Activated CD4-positive, alpha-beta T cell treated with anti-CD3 and anti-CD28 coated beads, Interleukin-2, amount 10 ng/mL, durations not matched to agents 24 days and 14 days (primary cell): ENCODE measurements at regions of chr2 and their contacts with region 1.

Region 1: GRCh38 chr2:96265840-96266679 is at the starts of genes CIAO1 and TMEM127:
- DNase-seq: peak; percentile 100
- H3K4me3 Mint-ChIP-seq: peak within 1 kb of the TSS; percentile 99
- H3K27ac Mint-ChIP-seq: peak within 1 kb of the TSS; percentile 98
- H3K4me1 Mint-ChIP-seq: peaks cover 38% of the 10 kb centered on the region
- H3K27me3 Mint-ChIP-seq: no peaks in the 10 kb centered on the region
- total RNA-seq, gene CIAO1: 105 and 110 TPM in 2 replicates
- total RNA-seq, gene TMEM127: 31.6 and 33.1 TPM in 2 replicates

Region 2: GRCh38 chr2:96208143-96209010 is 57.7 kb before region 1 on chr2 and contains the start of gene STARD7:
- intact Hi-C with region 1: loop called (anchors 1 kb)
- DNase-seq: peak; percentile 99
- H3K4me3 Mint-ChIP-seq: peak within 1 kb of the TSS; percentile 96
- H3K27ac Mint-ChIP-seq: peak within 1 kb of the TSS; percentile 90
- H3K4me1 Mint-ChIP-seq: peaks cover 50% of the 10 kb centered on the region
- H3K27me3 Mint-ChIP-seq: no peaks in the 10 kb centered on the region
- total RNA-seq, gene STARD7: 212 and 217 TPM in 2 replicates

Region 3: GRCh38 chr2:96225016-96225533 is 41.0 kb before region 1 on chr2:
- intact Hi-C with region 1: no loop called
- DNase-seq: no peak
- H3K4me3 Mint-ChIP-seq: no peak overlapping the region
- H3K27ac Mint-ChIP-seq: peak overlapping the region; percentile 72
- H3K4me1 Mint-ChIP-seq: peaks cover 10% of the 10 kb centered on the region
- H3K27me3 Mint-ChIP-seq: no peaks in the 10 kb centered on the region

Region 4: GRCh38 chr2:96241900-96242611 is 24.0 kb before region 1 on chr2:
- intact Hi-C with region 1: loop called (anchors 1 kb)
- DNase-seq: peak; percentile 89
- H3K4me3 Mint-ChIP-seq: peak overlapping the region; percentile 69
- H3K27ac Mint-ChIP-seq: peak overlapping the region; percentile 93
- H3K4me1 Mint-ChIP-seq: peaks cover 45% of the 10 kb centered on the region
- H3K27me3 Mint-ChIP-seq: no peaks in the 10 kb centered on the region

Region 5: DNA sequence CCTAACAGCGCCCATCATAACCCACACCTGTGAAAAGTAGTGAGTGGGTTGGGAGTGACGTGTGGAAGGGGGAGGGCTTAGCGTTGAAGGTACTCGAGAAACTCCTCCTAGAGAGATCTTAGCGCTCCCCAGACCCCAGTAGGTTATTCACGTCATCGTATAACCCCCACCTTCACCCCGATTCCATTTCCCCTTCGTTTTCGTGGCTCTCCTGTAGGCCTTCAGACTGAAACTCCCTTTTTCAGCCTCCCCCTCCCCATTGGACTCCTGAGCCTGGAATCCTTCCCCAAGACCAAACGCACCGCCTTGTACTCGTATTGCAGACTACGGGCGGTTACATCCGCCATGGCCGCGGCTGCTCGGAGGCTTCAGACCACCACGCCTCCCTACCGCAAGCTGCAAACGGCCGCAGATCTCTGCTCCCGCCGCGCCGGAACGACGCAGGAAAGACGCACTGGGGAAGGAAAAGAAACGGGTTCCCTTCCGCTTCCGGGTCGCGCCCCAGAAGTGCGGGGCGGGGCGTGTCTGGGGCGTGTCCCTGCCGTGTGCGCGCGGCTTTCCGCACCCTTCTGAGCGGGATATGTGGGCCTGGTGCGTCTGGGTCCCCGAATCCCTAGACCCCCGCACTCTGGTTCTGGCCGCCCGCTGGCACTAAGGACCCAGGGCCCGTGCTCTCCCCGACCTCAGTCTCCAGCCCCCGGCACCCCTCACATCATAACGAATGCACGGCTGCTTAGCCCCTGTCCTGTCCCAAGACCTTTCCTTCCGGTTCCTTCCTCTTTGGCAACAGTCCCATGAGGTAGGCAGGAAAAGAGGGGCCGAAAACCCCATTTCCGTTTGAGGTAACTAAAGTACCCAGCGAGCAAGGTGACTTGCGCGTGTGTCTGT is 39.3 kb after region 1 on chr2 and contains the start of gene SNRNP200:
- intact Hi-C with region 1: loop called (anchors 1 kb)
- DNase-seq: peak; percentile 97
- H3K4me3 Mint-ChIP-seq: peak within 1 kb of the TSS; percentile 100
- H3K27ac Mint-ChIP-seq: peak within 1 kb of the TSS; percentile 99
- H3K4me1 Mint-ChIP-seq: peaks cover 56% of the 10 kb centered on the region
- H3K27me3 Mint-ChIP-seq: no peaks in the 10 kb centered on the region
- total RNA-seq, gene SNRNP200: 197 and 203 TPM in 2 replicates

Region 6: GRCh38 chr2:96336104-96336775 is 70.2 kb after region 1 on chr2:
- intact Hi-C with region 1: loop called (anchors 5 kb)
- DNase-seq: peak; percentile 69
- H3K4me3 Mint-ChIP-seq: peak overlapping the region; percentile 91
- H3K27ac Mint-ChIP-seq: peak overlapping the region; percentile 88
- H3K4me1 Mint-ChIP-seq: peaks cover 49% of the 10 kb centered on the region
- H3K27me3 Mint-ChIP-seq: no peaks in the 10 kb centered on the region

Region 7: GRCh38 chr2:96550044-96550786 is 284.2 kb after region 1 on chr2:
- intact Hi-C with region 1: no loop called
- DNase-seq: no peak
- H3K4me3 Mint-ChIP-seq: no peak overlapping the region
- H3K27ac Mint-ChIP-seq: no peak overlapping the region
- H3K4me1 Mint-ChIP-seq: peaks cover 37% of the 10 kb centered on the region
- H3K27me3 Mint-ChIP-seq: no peaks in the 10 kb centered on the region